Calu3 (cell line): ENCODE measurements at regions of chr1 and their contacts with region 1.

Region 1: DNA sequence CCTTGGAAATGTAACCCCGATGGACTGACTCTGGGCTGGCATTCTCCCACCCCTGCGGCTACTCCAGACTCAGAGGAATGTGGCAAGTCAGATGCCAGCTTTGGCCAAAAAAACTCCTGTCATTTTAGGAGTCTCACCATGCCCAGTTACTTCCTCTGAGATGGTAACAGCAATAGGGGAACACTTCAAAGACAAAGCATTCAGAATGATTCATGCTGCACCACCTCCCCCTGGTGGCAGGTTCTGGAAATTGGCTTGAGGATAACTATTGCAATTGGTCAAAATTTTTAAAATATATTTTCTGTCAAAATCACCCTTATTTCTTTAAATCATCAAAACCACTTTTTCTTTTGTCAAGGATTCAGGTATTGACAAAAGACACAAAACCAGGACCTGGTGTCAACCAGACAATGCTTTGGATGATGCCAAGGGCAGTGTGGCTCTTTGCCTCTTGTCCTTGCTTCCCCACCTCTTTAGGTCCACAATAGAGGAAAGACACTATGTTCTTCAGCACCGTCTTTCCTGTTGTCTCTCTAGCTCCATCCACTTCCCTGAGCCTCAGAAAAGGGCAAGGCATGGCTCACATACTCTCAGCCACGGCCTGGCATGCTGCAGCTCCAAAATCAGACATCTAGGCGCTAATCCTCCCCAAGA is 9.9 kb upstream of the CDCA8 start:
- DNase-seq: peak; percentile 80
- H3K4me3 Mint-ChIP-seq: no peak overlapping the region
- H3K27ac Mint-ChIP-seq: no peak overlapping the region
- H3K4me1 Mint-ChIP-seq: no peaks in the 10 kb centered on the region
- H3K27me3 Mint-ChIP-seq: peaks cover 5% of the 10 kb centered on the region
- CTCF ChIP-seq: peak; percentile 83

Region 2: GRCh38 chr1:37458528-37458927 is 223.9 kb before region 1 on chr1:
- CTCF ChIA-PET with region 1: no interaction called
- intact Hi-C with region 1: loop called (anchors 5 kb)
- DNase-seq: no peak
- H3K4me3 Mint-ChIP-seq: no peak overlapping the region
- H3K27ac Mint-ChIP-seq: no peak overlapping the region
- H3K4me1 Mint-ChIP-seq: peaks cover 9% of the 10 kb centered on the region
- H3K27me3 Mint-ChIP-seq: no peaks in the 10 kb centered on the region
- CTCF ChIP-seq: no peak

Region 3: DNA sequence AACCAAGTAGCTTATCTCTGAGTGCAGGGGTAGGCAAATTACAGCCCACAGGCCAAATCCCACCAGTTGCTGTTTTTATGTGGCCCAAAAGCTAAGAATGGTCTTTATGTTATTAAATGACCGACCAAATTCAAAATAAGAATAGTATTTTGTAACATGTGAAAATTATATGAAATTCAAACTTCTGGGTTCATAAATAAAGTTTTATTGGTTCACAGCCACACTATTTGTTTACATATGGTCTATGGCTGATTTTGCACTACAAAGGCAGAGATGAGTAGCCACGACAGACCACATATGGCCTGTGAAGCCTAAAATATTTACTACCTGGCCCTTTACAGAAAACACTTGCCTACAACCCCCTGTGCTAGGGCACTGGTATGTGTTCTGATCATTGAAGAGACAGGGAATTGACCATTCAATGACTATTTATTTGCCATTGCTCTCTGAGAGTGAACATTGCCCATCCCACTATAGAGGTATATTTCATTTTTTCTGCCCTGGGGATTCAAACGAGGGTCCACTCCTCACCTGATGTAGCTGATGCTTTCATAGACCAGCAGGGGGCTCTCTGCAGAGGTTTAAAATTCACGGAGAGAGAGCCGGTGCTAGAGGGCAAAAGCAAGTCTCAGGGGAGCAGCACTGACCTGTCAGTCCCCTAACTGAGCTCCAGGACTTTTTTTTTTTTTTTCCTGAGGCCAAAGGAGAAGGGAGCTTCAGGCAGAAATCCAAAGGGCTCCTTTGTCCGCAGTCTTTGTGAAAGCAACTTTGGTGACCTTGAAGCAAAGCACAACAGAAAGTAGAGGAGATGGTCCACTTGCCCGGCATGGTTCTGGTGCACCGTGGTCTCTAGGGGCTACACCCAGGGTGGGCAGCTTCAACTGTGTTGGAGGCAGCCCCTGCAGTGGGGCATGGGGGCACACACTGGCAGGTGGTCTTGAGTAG is 79.4 kb before region 1 on chr1:
- CTCF ChIA-PET with region 1: interaction called, 4 read pairs
- intact Hi-C with region 1: loop called (anchors 1 kb)
- DNase-seq: peak; percentile 40
- H3K4me3 Mint-ChIP-seq: no peak overlapping the region
- H3K27ac Mint-ChIP-seq: no peak overlapping the region
- H3K4me1 Mint-ChIP-seq: no peaks in the 10 kb centered on the region
- H3K27me3 Mint-ChIP-seq: peaks cover 18% of the 10 kb centered on the region
- CTCF ChIP-seq: peak; percentile 70